OCI-LY7 (cell line): ENCODE measurements at regions of chr5 and their contacts with region 1.

Region 1: DNA sequence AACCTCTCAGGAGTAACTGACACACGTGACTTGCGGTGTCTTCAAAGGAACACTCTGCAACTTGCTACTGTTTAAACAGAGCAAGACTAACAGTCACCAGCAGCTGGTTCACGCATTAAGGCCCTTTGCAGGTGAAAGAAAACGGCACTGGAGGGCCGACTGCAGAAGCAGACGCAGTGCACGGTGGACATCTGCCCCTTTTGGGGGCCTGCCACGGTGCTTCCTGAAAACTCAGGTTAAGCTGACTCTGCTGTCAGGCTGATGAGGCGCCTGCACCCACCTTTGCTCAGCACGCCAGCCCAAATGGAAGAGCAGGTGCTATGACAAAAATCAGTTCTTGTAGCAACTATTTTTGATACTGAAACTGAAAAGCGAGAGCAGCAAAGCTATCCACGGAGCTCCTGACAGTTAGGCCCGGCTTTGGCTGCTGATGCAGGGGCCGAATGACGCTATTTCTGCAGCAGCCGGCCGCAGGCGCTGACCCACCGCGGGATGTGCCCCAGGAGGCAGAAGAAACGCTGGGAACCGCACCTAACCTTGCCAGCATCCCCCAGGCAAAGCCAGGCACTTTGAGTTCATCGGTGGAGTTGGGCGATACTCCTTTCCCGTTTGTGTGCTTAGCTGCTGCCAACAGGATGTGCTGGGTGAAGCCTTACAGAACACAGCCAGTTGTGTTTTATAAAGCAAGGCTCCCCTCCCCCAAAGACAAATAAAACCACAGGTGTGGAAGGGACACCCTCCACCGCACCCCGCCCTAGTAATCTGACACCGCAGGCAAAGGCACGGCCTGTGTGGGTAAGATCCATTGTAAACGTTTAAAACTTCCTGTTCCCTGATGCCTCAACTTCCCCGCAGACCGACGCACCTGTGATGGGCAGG is 21.1 kb upstream of the TERT start:
- DNase-seq: peak; percentile 99
- H3K4me3 ChIP-seq: peak overlapping the region; percentile 66
- H3K27ac ChIP-seq: peak overlapping the region; percentile 100
- H3K4me1 ChIP-seq: peaks cover 73% of the 10 kb centered on the region
- CTCF ChIP-seq: no peak

Region 2: GRCh38 chr5:1262381-1262780 is 53.6 kb before region 1 on chr5:
- CTCF ChIA-PET with region 1: no interaction called
- POLR2A ChIA-PET with region 1: no interaction called
- intact Hi-C with region 1: loop called (anchors 5 kb)
- DNase-seq: no peak
- H3K4me3 ChIP-seq: no peak overlapping the region
- H3K27ac ChIP-seq: peak overlapping the region; percentile 25
- H3K4me1 ChIP-seq: no peaks in the 10 kb centered on the region
- CTCF ChIP-seq: no peak

Region 3: DNA sequence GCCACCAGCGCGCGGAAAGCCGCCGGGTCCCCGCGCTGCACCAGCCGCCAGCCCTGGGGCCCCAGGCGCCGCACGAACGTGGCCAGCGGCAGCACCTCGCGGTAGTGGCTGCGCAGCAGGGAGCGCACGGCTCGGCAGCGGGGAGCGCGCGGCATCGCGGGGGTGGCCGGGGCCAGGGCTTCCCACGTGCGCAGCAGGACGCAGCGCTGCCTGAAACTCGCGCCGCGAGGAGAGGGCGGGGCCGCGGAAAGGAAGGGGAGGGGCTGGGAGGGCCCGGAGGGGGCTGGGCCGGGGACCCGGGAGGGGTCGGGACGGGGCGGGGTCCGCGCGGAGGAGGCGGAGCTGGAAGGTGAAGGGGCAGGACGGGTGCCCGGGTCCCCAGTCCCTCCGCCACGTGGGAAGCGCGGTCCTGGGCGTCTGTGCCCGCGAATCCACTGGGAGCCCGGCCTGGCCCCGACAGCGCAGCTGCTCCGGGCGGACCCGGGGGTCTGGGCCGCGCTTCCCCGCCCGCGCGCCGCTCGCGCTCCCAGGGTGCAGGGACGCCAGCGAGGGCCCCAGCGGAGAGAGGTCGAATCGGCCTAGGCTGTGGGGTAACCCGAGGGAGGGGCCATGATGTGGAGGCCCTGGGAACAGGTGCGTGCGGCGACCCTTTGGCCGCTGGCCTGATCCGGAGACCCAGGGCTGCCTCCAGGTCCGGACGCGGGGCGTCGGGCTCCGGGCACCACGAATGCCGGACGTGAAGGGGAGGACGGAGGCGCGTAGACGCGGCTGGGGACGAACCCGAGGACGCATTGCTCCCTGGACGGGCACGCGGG is 20.9 kb before region 1 on chr5 and contains the start of gene TERT:
- CTCF ChIA-PET with region 1: interaction called, 5 read pairs
- POLR2A ChIA-PET with region 1: interaction called, 60 read pairs
- intact Hi-C with region 1: loop called (anchors 1 kb)
- DNase-seq: peak; percentile 91
- H3K4me3 ChIP-seq: peak within 1 kb of the TSS; percentile 79
- H3K27ac ChIP-seq: peak within 1 kb of the TSS; percentile 87
- H3K4me1 ChIP-seq: peaks cover 72% of the 10 kb centered on the region
- CTCF ChIP-seq: no peak
- total RNA-seq, gene TERT: 120 and 156 TPM in 2 replicates

Region 4: GRCh38 chr5:1304033-1304432 is 11.9 kb before region 1 on chr5:
- CTCF ChIA-PET with region 1: no interaction called
- POLR2A ChIA-PET with region 1: interaction called, 10 read pairs
- intact Hi-C with region 1: no loop called
- DNase-seq: no peak
- H3K4me3 ChIP-seq: no peak overlapping the region
- H3K27ac ChIP-seq: peak overlapping the region; percentile 44
- H3K4me1 ChIP-seq: peaks cover 62% of the 10 kb centered on the region
- CTCF ChIP-seq: no peak

Region 5: GRCh38 chr5:1344975-1345838 is 29.3 kb after region 1 on chr5 and contains the start of gene CLPTM1L:
- CTCF ChIA-PET with region 1: interaction called, 6 read pairs
- POLR2A ChIA-PET with region 1: interaction called, 78 read pairs
- intact Hi-C with region 1: loop called (anchors 1 kb)
- DNase-seq: peak; percentile 94
- H3K4me3 ChIP-seq: peak within 1 kb of the TSS; percentile 89
- H3K27ac ChIP-seq: peak within 1 kb of the TSS; percentile 94
- H3K4me1 ChIP-seq: peaks cover 63% of the 10 kb centered on the region
- CTCF ChIP-seq: no peak
- total RNA-seq, gene CLPTM1L: 356 and 395 TPM in 2 replicates

Region 6: DNA sequence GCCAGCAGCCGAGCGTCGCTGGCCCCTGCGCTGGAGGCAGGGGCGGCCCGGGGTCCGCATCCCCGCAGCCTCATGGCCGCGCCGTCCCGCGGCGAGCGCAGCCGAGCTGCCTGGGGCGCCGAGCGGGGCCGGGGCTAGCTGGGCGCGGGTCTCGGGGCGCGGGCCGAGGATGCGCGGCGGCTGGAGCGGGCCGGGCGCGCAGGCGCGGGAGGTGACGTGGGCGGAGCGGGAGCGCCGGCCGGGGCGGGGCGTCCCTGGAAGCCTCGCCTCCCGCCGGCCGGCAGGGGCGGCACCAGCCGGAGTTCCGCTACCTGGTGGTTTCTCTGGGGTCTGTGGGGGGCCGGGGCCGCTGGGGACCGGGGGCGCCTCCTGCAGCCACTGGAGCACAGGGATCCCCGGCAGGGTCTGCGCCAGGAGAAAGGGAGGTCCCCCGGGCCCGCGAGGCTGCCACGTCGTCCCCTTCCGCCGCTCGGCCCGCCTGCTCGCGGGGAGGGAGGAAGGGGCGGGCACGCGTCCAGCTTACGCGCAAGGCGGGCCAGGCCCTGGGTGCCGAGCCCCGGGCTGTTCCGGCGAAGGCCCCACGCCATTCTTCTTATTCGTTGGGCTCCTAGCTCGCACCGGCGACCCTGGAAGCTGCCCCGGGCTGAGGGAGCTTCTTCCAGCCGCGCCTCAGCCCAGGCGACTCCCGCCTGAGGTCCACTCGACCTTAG is 208.0 kb after region 1 on chr5 and contains the start of gene LPCAT1:
- CTCF ChIA-PET with region 1: no interaction called
- POLR2A ChIA-PET with region 1: no interaction called
- intact Hi-C with region 1: loop called (anchors 10 kb)
- DNase-seq: peak; percentile 83
- H3K4me3 ChIP-seq: peak within 1 kb of the TSS; percentile 90
- H3K27ac ChIP-seq: peak within 1 kb of the TSS; percentile 87
- H3K4me1 ChIP-seq: peaks cover 50% of the 10 kb centered on the region
- CTCF ChIP-seq: no peak
- total RNA-seq, gene LPCAT1: 47.7 and 69.1 TPM in 2 replicates

Region 7: GRCh38 chr5:1724822-1725643 is 409.1 kb after region 1 on chr5:
- CTCF ChIA-PET with region 1: no interaction called
- POLR2A ChIA-PET with region 1: no interaction called
- intact Hi-C with region 1: no loop called
- DNase-seq: no peak
- H3K4me3 ChIP-seq: no peak overlapping the region
- H3K27ac ChIP-seq: no peak overlapping the region
- H3K4me1 ChIP-seq: no peaks in the 10 kb centered on the region
- CTCF ChIP-seq: no peak

Region 8: DNA sequence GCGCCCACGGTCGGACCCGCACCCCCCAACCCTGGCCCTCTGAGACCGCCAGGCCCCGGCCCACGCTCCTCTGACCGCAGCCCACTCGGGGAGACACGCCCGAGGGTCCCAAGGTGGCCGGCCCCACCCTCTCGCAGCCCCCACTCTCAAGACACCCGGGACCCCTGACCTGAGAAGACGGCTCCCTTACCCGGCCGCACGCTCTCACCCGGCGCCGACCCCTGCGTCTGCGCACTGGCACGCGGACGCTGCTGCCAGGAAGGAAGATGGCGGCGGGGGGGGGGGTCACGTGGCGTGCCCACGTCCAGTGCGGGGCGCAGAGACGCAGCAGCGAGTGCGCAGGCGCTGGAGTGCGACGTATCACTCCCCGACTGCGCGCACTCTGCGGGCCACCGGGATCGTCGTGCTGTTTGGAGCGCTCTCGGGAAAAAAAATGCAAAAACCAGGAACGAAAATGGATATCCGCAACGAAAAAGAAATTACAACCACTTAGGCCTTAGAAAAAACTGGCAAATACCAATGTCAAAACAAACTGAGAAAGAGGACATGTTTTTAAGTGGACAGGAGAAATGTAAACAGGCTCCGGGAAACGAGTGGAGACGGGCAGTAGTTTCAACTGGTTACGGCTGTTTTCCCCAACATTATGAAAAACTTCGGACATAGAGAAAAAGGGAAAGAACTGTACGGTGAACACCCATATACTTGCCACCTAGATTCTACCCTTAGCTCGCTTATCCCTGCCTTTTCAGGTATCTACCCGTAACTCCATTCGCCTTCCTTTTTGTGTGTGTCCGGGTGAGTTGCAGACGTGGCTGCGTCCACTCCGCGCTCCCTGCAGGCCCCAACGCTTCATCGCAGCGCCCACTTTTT is 483.9 kb after region 1 on chr5 and contains the start of gene MRPL36:
- CTCF ChIA-PET with region 1: no interaction called
- POLR2A ChIA-PET with region 1: no interaction called
- intact Hi-C with region 1: loop called (anchors 10 kb)
- DNase-seq: peak; percentile 93
- H3K4me3 ChIP-seq: peak within 1 kb of the TSS; percentile 87
- H3K27ac ChIP-seq: peak within 1 kb of the TSS; percentile 79
- H3K4me1 ChIP-seq: peaks cover 23% of the 10 kb centered on the region
- CTCF ChIP-seq: no peak
- total RNA-seq, gene MRPL36: 82.5 and 91.7 TPM in 2 replicates